Left lung (tissue), 14 donors: ENCODE measurements at regions of chr4 and their contacts with region 1.

Region 1: GRCh38 chr4:84971319-84971932 is 4.9 kb upstream of the WDFY3 start:
- DNase-seq: peak in 2 of 4 donors; percentile 37 to 64
- ATAC-seq: peak; percentile 15
- H3K4me3 ChIP-seq: no peak overlapping the region
- H3K27ac ChIP-seq: no peak overlapping the region
- H3K4me1 ChIP-seq: peaks cover 0 to 29% of the 10 kb centered on the region in 2 donors
- H3K27me3 ChIP-seq: no peaks in the 10 kb centered on the region
- CTCF ChIP-seq: peak; percentile 32 to 52

Region 2: DNA sequence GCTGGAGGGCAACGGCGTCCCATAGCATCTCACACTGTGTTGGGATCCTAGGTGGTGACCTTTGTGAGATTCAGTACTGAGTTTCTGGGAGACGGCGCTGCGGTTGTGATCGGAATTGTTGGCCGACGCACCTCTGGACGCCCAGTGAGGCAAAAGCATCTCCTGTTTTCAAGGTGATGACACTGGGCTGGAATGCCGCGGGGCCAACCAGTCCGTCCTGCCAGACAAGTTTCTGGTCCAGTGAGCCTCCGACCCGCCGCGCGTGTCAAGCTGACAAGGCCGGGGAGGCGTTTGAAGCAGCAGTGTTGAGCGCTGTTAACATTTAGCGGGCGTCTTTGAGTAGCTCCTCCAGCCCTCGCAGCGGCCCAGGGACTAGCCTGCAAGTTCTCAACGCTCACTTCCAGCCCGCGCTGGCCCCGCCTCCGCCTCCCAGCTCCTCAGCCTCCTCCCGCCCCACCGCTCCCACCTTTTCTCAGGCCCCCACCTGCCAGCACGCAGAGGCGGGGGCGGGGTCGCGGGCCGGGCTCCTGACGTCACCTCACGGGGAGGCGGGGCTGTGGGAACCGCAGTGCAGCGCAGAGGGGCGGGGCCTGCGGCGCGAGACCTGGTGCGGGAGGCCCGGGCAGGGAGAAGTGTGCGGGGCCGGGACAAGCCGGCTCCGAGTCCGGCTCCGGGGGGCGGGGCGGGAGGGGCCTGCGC is 389.0 kb before region 1 on chr4:
- intact Hi-C with region 1: loop called in 1 of 2 experiments (anchors 10 kb)
- DNase-seq: peak; percentile 73 to 97 (median 92)
- ATAC-seq: peak; percentile 89
- H3K4me3 ChIP-seq: peak overlapping the region; percentile 83 to 85
- H3K27ac ChIP-seq: peak overlapping the region; percentile 82 to 88
- H3K4me1 ChIP-seq: peaks cover 0 to 9% of the 10 kb centered on the region in 2 donors
- H3K27me3 ChIP-seq: peaks cover 4 to 73% of the 10 kb centered on the region in 2 donors
- CTCF ChIP-seq: no peak

Region 3: DNA sequence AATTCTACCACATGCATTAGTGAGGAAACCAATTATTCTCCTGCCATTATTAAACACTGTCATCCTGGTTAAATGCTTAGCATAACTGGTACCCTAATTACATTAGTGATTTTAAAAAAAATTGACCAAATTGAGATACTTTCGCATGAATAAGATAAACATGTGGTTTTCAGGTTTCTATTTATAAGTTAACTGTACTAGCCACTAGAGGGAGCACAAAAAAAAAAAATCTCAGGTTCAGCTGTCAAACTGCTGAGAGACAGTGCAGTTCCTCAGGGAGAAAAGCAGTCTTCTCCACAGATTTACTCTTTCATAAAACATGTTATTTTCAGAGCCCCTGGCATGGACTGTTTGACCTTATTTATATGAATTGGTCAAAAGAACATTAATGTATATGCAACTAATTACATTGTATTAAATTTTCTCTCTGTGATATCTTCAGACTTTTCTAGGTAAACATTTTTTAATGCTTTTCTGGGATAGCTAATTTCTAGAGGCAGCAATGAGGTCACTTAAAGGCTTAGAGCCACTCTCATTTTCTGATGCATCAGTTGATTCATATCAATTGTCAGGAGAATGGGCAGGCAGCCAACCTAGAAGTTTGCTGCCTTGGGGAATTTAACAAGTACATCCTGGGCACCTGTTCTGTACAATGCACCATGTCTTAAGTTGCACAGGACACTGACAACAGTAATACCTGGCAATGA is 221.0 kb before region 1 on chr4:
- intact Hi-C with region 1: loop called in 1 of 2 experiments (anchors 5 kb)
- DNase-seq: peak in 2 of 4 donors; percentile 41 to 52
- ATAC-seq: peak; percentile 84
- H3K4me3 ChIP-seq: no peak overlapping the region
- H3K27ac ChIP-seq: no peak overlapping the region
- H3K4me1 ChIP-seq: peaks cover 0 to 45% of the 10 kb centered on the region in 2 donors
- H3K27me3 ChIP-seq: no peaks in the 10 kb centered on the region
- CTCF ChIP-seq: peak; percentile 42 to 49